Ascending aorta (tissue), 2 donors: ENCODE measurements at regions of chr2 and their contacts with region 1.

Region 1: DNA sequence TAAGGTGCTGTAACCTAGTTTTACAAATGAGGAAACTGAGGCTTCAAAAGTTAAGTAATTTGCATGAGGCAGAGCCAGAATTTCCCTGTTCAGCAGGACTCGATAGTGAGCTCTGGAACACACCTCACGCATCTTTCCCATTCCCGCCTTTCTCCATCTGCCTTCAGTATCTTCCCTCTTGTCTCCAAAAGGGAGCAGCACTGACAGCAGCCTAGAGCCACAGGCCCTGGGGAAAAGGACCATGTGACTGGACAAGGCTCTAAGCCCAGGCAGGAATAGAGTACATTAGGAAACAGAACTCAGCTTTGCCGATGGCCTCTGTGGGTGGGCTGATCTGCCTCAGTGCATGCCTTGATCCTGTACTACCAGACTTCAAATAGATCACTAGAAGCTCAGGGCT is 21.5 kb downstream of the GPR155 start:
- DNase-seq: no peak
- H3K4me3 ChIP-seq: no peak overlapping the region
- H3K27ac ChIP-seq: no peak overlapping the region
- H3K4me1 ChIP-seq: no peaks in the 10 kb centered on the region
- H3K27me3 ChIP-seq: no peaks in the 10 kb centered on the region
- CTCF ChIP-seq: no peak

Region 2: GRCh38 chr2:174138161-174138560 is 327.2 kb before region 1 on chr2:
- intact Hi-C with region 1: no loop called
- DNase-seq: no peak
- H3K4me3 ChIP-seq: no peak overlapping the region
- H3K27ac ChIP-seq: no peak overlapping the region
- H3K4me1 ChIP-seq: no peaks in the 10 kb centered on the region
- H3K27me3 ChIP-seq: no peaks in the 10 kb centered on the region
- CTCF ChIP-seq: no peak

Region 3: DNA sequence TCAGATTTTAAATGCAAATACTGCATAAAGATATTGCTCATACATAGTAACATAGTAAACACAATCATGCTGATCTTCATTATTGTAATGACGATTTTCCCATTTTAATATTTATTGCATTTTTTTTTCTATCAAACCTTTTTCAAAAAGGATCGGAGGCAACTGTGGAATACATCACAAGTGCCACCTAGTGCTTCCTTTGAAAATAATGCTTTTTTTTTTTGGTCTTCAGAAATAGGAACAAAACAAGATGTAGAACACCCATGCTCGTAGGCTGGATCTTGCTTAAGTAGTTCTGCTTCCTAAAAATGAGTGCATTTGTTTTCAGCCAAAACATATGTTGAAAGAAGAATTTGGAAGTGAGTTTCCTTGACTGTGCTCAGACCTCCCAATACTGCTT is 57.2 kb after region 1 on chr2:
- intact Hi-C with region 1: loop called (anchors 10 kb)
- DNase-seq: no peak
- H3K4me3 ChIP-seq: no peak overlapping the region
- H3K27ac ChIP-seq: no peak overlapping the region
- H3K4me1 ChIP-seq: no peaks in the 10 kb centered on the region
- H3K27me3 ChIP-seq: no peaks in the 10 kb centered on the region
- CTCF ChIP-seq: peak in 1 of 3 experiments; percentile 31

Region 4: GRCh38 chr2:174603280-174603679 is 138.0 kb after region 1 on chr2:
- intact Hi-C with region 1: loop called (anchors 2 kb)
- DNase-seq: peak; percentile 35 to 83
- H3K4me3 ChIP-seq: no peak overlapping the region
- H3K27ac ChIP-seq: no peak overlapping the region
- H3K4me1 ChIP-seq: peaks cover 3 to 17% of the 10 kb centered on the region in 2 donors
- H3K27me3 ChIP-seq: no peaks in the 10 kb centered on the region
- CTCF ChIP-seq: peak; percentile 60 to 73 (median 63)

Region 5: GRCh38 chr2:174688079-174688478 is 222.8 kb after region 1 on chr2:
- intact Hi-C with region 1: loop called (anchors 2 kb)
- DNase-seq: no peak
- H3K4me3 ChIP-seq: no peak overlapping the region
- H3K27ac ChIP-seq: no peak overlapping the region
- H3K4me1 ChIP-seq: peaks cover 0 to 3% of the 10 kb centered on the region in 2 donors
- H3K27me3 ChIP-seq: no peaks in the 10 kb centered on the region
- CTCF ChIP-seq: peak; percentile 42 to 59 (median 43)